AG04450 (cell line): ENCODE measurements at regions of chr9 and their contacts with region 1.

Region 1: DNA sequence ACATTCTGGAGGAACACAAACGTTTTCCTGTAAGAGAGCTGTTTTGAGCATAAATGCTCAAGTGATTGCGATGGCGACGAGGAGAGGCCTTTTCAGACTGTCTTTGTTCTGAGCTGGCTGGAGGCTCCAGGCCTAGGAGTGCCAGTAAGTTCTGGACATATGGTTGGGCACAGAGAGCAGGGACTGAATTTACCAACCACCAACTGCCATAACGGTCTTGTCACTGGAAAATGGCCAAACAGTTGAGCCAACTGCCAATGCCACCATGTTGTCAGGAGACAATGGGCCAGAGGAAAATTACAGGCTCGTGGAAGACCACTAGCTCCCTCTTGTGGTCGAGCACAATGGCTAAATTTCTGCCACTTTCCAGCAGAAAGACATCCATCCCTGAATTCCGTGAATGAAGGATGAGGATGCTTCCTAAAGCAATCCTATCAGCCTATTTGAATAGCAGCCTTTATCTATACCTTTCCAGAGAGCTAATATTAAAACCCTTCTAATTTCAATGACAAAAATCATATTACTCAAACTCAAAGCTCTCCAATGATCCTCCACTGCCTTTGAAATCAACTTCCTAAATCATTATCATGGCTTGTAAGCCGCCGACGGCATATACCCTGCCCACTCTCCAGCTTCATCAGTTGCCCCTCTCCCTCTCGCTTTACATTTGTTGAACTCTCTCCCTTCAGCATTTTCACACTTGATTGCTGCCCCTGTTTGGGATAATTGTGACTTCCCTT is 66.9 kb upstream of the GLIS3 start:
- DNase-seq: peak; percentile 24
- H3K4me3 ChIP-seq: no peak overlapping the region
- H3K27ac ChIP-seq: no peak overlapping the region
- H3K27me3 ChIP-seq: peaks cover 5% of the 10 kb centered on the region
- CTCF ChIP-seq: peak; percentile 87

Region 2: DNA sequence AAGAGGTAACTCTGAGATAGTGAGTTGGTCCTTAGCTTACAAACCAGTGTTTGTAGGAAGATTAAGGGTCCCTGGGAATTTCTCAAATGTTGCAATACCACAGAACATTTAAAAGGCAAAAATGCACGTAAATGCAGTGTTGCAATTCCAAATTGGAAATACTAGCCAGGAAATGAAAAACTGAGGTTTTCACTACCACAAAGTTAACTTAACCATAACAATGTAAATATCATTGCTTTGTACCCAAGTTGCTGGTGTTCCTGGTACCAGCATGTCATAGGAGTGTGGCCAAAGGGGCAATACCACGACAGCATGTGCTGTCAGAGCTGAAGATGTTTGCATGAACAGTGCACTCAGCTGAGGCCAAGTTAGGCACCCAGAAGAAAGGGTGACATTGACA is 449.8 kb before region 1 on chr9:
- CTCF ChIA-PET with region 1: interaction called, 14 read pairs
- POLR2A ChIA-PET with region 1: no interaction called
- DNase-seq: peak; percentile 46
- H3K4me3 ChIP-seq: no peak overlapping the region
- H3K27ac ChIP-seq: no peak overlapping the region
- H3K27me3 ChIP-seq: no peaks in the 10 kb centered on the region
- CTCF ChIP-seq: no peak

Region 3: DNA sequence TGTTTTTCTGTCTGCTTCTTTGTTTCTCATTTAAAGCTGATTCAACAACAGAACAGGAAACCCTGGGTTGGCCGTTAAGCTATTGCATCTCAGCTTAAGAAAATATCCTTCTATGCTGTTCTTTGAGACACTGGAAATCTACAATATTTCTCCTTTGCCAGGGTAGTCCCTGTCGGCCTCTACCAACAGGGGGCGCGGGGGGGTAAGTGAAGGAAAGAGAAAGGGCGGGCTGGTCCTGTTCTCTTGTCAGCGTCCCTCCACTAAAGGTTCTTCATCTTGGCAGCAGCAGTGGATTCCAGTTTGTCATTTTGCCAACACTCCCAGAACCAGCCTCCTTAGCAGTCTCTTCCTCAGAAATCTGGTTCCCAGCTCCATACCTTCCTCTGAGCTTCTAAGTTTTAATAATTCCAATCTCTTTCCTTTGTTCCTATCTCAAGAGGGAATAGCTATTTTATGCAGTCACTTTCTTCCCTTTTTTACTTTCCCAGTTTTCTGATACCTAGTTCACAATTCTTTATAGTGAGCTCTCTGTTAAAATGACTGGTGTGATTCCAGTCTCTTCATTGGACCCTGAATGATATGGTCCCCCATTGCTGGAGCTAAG is 289.2 kb before region 1 on chr9:
- CTCF ChIA-PET with region 1: interaction called, 11 read pairs
- POLR2A ChIA-PET with region 1: no interaction called
- DNase-seq: peak; percentile 29
- H3K4me3 ChIP-seq: no peak overlapping the region
- H3K27ac ChIP-seq: no peak overlapping the region
- H3K27me3 ChIP-seq: no peaks in the 10 kb centered on the region
- CTCF ChIP-seq: peak; percentile 70

Region 4: GRCh38 chr9:4382722-4383317 is 16.1 kb after region 1 on chr9:
- CTCF ChIA-PET with region 1: interaction called, 14 read pairs
- POLR2A ChIA-PET with region 1: no interaction called
- DNase-seq: no peak
- H3K4me3 ChIP-seq: no peak overlapping the region
- H3K27ac ChIP-seq: no peak overlapping the region
- H3K27me3 ChIP-seq: peaks cover 14% of the 10 kb centered on the region
- CTCF ChIP-seq: peak; percentile 47

Region 5: DNA sequence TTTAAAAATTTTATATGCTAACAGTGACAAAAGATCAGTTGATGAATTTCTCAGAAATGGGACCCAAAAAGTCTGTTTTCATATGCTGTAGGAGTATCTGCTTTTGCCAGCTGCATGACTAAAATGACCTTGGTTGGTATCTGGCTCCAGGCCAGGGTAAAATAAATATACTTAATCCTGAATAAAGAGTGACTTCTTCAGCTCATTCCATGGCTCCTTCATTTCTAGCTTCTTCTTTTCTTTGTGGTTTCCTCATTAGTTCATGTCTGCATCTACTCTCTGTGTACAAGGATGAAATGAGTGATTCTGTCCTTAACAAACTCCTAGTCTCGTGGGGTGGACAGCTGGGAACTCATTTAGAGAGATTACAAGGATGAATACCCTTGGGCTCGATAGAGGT is 462.0 kb after region 1 on chr9:
- CTCF ChIA-PET with region 1: no interaction called
- POLR2A ChIA-PET with region 1: no interaction called
- DNase-seq: no peak
- H3K4me3 ChIP-seq: no peak overlapping the region
- H3K27ac ChIP-seq: no peak overlapping the region
- H3K27me3 ChIP-seq: no peaks in the 10 kb centered on the region
- CTCF ChIP-seq: no peak

Region 6: DNA sequence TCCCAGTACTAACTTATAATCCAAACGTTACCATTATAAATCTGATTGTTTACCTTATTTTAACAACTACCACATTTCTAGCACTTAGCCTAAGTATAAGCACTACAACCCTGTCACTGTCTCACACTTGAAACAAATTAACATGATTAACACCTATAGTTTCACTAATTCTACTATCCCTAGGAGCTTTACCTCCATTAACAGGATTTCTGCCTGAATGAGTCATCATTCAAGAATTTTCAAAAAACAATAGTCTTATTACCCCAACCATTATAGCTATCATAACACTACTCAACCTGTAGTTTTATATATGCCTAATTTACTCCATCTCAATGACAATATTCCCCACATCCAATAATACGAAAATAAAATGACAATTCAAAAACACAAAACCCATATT is 729.0 kb after region 1 on chr9:
- CTCF ChIA-PET with region 1: no interaction called
- POLR2A ChIA-PET with region 1: no interaction called
- DNase-seq: no peak
- H3K4me3 ChIP-seq: no peak overlapping the region
- H3K27ac ChIP-seq: no peak overlapping the region
- H3K27me3 ChIP-seq: no peaks in the 10 kb centered on the region
- CTCF ChIP-seq: no peak